Activated T-helper 2 cell treated with anti-CD3 and anti-CD28 coated beads, Interferon-gamma antibody, Interleukin-2, Interleukin-4, amounts not matched to agents 10 μg/mL and 5 μg/mL and 100 μg/mL, durations not matched to agents 14 hours and 24 hours and 36 hours (primary cell): ENCODE measurements at regions of chr2 and their contacts with region 1.

Region 1: DNA sequence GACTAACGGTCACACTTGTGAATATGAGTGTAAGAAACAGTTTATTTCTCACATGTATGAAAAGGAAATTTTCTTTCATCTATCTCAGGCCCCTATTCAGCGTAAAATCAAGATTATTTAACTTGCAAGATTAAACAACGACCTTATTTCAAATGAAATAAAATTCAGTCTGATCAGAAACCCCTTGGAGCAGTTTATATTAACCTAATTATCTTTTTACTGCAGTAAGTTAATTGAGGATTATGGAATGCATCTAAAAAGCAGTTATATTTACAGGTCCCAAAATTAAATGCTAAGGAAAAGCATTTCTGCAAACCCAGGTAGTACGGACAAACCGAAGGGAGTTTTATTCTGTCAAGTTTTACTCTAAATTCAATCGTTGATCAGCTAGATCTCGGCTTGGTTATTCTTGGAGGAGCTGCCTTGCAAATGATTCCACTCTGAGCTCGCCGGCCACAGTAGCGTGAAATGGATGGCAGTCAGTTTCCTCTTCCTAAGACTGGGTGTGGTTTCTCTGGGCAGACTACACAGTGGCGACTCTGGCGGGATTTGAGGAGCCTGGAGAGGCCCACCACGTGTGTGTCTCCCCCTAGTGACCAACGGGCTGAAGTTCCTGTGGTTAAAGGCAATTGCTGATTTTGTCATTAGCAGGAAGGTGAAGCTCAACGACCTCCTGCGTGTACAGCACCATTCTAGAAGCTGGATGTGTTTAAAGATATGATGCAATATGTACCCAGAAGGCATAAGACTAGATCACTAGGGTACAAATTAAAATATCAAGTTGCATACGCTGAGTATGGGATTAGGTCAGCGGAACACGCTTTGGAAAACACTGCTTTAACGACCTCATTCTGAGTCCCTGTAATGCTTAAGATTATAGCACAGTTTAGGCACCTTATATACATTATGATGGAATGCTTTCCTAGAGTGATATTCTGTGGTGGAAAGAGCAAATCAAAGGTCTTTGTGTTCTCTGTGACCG is 36.4 kb downstream of the PRKRA start:
- DNase-seq: peak; percentile 80
- H3K4me3 Mint-ChIP-seq: peak overlapping the region; percentile 94
- H3K27ac Mint-ChIP-seq: peak overlapping the region; percentile 98
- H3K4me1 Mint-ChIP-seq: peaks cover 50% of the 10 kb centered on the region
- H3K27me3 Mint-ChIP-seq: no peaks in the 10 kb centered on the region

Region 2: GRCh38 chr2:178112202-178113152 is 302.1 kb before region 1 on chr2 and contains the start of gene RBM45:
- intact Hi-C with region 1: loop called (anchors 1 kb)
- DNase-seq: peak; percentile 81
- H3K4me3 Mint-ChIP-seq: peak within 1 kb of the TSS; percentile 87
- H3K27ac Mint-ChIP-seq: peak within 1 kb of the TSS; percentile 65
- H3K4me1 Mint-ChIP-seq: peaks cover 30% of the 10 kb centered on the region
- H3K27me3 Mint-ChIP-seq: no peaks in the 10 kb centered on the region
- total RNA-seq, gene RBM45: 14.3 and 19.8 TPM in 2 replicates

Region 3: GRCh38 chr2:178306352-178307073 is 108.0 kb before region 1 on chr2:
- intact Hi-C with region 1: loop called (anchors 1 kb)
- DNase-seq: peak; percentile 24
- H3K4me3 Mint-ChIP-seq: no peak overlapping the region
- H3K27ac Mint-ChIP-seq: no peak overlapping the region
- H3K4me1 Mint-ChIP-seq: no peaks in the 10 kb centered on the region
- H3K27me3 Mint-ChIP-seq: peaks cover 13% of the 10 kb centered on the region

Region 4: GRCh38 chr2:178345951-178346350 is 68.6 kb before region 1 on chr2:
- intact Hi-C with region 1: no loop called
- DNase-seq: no peak
- H3K4me3 Mint-ChIP-seq: no peak overlapping the region
- H3K27ac Mint-ChIP-seq: no peak overlapping the region
- H3K4me1 Mint-ChIP-seq: no peaks in the 10 kb centered on the region
- H3K27me3 Mint-ChIP-seq: peaks cover 15% of the 10 kb centered on the region

Region 5: DNA sequence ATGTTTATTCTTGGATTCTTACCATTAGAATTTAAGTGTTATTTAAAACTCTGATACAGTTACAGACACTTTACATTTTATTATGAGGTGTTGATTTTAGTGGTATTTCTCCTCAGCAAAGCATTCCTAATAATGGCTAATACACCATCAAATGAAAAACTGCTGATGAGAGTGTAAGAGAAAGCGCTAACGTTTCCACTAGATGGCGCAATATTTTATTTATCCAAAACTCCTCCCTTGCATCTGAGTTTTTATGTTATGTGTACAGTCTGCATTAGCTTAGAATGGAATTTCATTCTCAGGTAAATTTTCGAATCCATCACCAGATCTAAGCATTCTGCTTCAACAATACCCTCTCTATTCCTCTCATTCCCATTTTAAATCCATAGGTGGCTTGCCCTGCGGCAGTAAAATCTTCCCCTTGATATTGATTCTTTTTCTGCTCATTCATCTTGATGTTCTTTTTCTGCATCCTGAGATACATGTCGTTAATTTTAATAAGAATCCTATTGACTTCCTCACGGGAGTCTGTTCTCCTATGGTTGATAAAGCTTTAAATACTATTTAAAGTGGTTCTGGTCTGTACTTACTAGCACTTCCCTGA is 17.5 kb before region 1 on chr2:
- intact Hi-C with region 1: loop called (anchors 1 kb)
- DNase-seq: no peak
- H3K4me3 Mint-ChIP-seq: no peak overlapping the region
- H3K27ac Mint-ChIP-seq: no peak overlapping the region
- H3K4me1 Mint-ChIP-seq: peaks cover 12% of the 10 kb centered on the region
- H3K27me3 Mint-ChIP-seq: peaks cover 21% of the 10 kb centered on the region

Region 6: GRCh38 chr2:178426388-178426787 is 11.8 kb after region 1 on chr2:
- intact Hi-C with region 1: no loop called
- DNase-seq: no peak
- H3K4me3 Mint-ChIP-seq: no peak overlapping the region
- H3K27ac Mint-ChIP-seq: no peak overlapping the region
- H3K4me1 Mint-ChIP-seq: peaks cover 10% of the 10 kb centered on the region
- H3K27me3 Mint-ChIP-seq: no peaks in the 10 kb centered on the region

Region 7: DNA sequence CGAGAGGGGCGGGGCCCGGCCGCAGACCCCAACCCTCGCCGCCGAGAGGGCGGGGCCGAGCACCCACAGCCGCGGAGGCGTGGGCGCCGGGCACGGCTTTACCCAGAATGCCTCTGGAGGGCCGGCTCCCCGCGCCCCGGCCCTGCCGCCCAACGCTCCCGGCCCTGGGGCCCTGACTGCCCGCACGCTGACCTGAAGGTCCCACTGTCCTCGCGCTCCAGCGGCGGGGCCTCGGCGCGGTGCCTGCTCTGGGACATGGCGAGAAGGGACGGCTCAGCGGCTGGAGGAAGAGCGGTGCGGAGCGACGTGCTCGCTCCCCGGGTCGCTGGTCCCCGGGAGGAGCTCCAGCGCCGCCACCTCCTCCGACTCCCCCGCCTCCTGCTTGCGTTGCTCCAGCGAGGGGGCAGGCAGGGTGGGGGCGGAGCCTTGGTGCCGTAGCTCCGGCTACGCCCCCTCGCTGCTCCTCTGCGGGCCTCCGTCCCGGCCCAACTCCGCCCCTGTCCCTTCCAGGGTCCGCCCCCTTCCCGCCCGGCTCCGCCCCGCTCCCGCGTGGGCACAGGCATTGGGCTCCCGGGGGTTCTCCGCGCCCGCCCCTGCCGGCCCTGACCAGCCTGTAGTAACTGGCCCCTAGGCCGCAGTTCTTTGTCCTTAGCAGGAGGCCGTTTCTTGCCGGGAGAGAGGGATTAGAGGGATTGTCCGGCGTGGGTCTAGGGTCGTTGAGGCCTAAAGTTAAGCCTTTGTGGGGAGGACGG is 36.4 kb after region 1 on chr2 and contains the starts of genes PJVK and PRKRA:
- intact Hi-C with region 1: loop called (anchors 1 kb)
- DNase-seq: peak; percentile 94
- H3K4me3 Mint-ChIP-seq: peak within 1 kb of the TSS; percentile 92
- H3K27ac Mint-ChIP-seq: peak within 1 kb of the TSS; percentile 99
- H3K4me1 Mint-ChIP-seq: peaks cover 29% of the 10 kb centered on the region
- H3K27me3 Mint-ChIP-seq: peaks cover 6% of the 10 kb centered on the region
- total RNA-seq, gene PJVK: 1.7 and 2.0 TPM in 2 replicates
- total RNA-seq, gene PRKRA: 65.8 and 67.8 TPM in 2 replicates

Region 8: GRCh38 chr2:178522950-178523595 is 108.5 kb after region 1 on chr2:
- intact Hi-C with region 1: loop called (anchors 5 kb)
- DNase-seq: peak; percentile 81
- H3K4me3 Mint-ChIP-seq: peak overlapping the region; percentile 99
- H3K27ac Mint-ChIP-seq: peak overlapping the region; percentile 95
- H3K4me1 Mint-ChIP-seq: peaks cover 55% of the 10 kb centered on the region
- H3K27me3 Mint-ChIP-seq: no peaks in the 10 kb centered on the region

Region 9: DNA sequence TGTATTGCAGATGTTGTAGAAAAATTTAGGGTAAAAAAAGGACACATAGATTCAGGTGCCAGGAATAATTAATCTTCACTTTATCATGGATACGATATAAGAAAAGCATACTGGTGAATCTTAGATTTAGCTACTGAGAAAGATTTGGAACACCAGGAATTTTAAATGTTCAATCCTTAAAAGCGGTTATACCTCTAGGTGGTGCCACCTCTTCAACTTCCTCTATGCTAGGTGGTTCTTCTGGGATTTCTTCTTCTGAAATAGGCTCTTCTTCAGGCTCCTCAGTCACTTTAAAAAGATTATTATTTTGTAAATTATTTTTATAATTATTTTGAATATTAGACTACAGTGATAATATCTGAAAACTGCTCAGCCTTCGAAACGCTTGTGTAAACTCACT is 259.6 kb after region 1 on chr2:
- intact Hi-C with region 1: no loop called
- DNase-seq: no peak
- H3K4me3 Mint-ChIP-seq: no peak overlapping the region
- H3K27ac Mint-ChIP-seq: no peak overlapping the region
- H3K4me1 Mint-ChIP-seq: no peaks in the 10 kb centered on the region
- H3K27me3 Mint-ChIP-seq: no peaks in the 10 kb centered on the region